IMR-90 (cell line): ENCODE measurements at regions of chr3 and their contacts with region 1.

Region 1: DNA sequence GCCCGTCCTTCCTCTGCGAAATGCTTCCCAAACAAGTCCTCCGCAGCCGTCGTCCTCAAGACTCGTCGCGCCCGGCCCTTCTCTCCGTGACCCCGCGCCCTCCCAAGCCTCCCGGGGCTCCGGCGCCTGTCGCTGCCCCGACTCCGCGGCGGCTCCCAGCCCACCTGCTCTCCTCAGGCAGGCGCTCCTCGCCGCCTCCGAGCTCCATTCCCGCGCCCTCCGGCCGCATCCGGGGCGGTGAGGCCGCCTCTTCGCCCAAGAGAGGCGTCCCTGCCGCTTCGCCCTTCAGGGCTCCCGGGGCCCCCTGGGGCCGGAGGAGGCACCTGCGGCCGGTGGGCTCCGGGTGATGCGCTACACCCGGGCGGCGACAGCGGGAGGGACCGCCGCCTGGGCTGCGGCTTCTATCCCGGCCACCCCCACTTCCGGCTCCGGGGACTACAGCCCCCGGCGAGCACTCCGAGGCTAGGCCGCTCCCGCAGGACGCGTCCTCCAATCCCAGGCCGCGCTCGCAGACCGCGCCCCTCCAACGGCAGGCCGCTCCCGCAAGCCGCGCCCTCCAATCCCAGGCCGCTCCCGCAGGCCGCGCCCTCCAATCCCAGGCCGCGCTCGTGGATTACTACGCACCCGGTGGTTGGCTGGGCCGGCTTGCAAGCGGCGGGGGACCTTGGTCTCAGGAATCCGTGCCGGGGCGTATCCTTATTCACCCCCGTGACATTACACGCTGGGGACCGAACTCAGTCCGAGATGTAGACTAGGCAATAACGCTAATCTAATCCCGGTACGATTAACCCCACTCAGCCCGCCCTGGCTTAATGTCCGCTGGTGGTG is at the start of gene RUBCN:
- DNase-seq: peak; percentile 92
- ATAC-seq: peak; percentile 99
- H3K4me3 ChIP-seq: peak within 1 kb of the TSS; percentile 75
- H3K27ac ChIP-seq: peak within 1 kb of the TSS; percentile 20
- H3K4me1 ChIP-seq: peaks cover 1% of the 10 kb centered on the region; the same call in 1 of the 2 replicates
- H3K27me3 ChIP-seq: no peaks in the 10 kb centered on the region
- CTCF ChIP-seq: no peak
- POLR2A ChIP-seq: peak; percentile 60
- RAD21 ChIP-seq: no peak; the same call in 1 of the 2 replicates
- total RNA-seq, gene RUBCN: 8.3 and 10.8 TPM in 2 replicates

Region 2: DNA sequence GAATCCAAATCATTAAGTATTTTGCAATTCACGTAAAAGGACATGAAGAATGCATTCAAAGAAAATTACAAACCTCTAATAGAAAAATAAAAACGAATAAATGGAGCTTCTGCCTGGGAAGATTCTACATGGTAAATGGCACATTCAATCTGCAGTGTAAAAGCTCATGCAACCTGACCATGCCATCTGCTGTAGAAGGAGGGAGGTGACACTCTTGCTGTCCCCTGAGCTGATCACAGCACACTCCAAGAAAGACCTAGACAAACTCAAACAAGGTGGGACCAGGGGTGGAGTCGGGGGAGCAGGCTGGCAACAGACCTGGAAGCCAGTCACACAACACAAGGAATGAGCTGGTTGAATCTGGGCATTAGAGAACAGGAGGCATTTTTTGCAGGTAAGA is 282.7 kb before region 1 on chr3:
- CTCF ChIA-PET with region 1: no interaction called
- POLR2A ChIA-PET with region 1: no interaction called
- dilution Hi-C with region 1: no loop called
- in situ Hi-C with region 1: no loop called
- intact Hi-C with region 1: no loop called
- DNase-seq: no peak
- ATAC-seq: no peak
- H3K4me3 ChIP-seq: no peak overlapping the region
- H3K27ac ChIP-seq: no peak overlapping the region
- H3K4me1 ChIP-seq: peaks cover 7% of the 10 kb centered on the region
- H3K27me3 ChIP-seq: peaks cover 7% of the 10 kb centered on the region
- CTCF ChIP-seq: no peak
- POLR2A ChIP-seq: no peak
- RAD21 ChIP-seq: peak; percentile 34; the same call in 1 of the 2 replicates

Region 3: GRCh38 chr3:197711973-197712707 is 24.6 kb before region 1 on chr3:
- CTCF ChIA-PET with region 1: no interaction called
- POLR2A ChIA-PET with region 1: no interaction called
- dilution Hi-C with region 1: no loop called
- in situ Hi-C with region 1: no loop called
- intact Hi-C with region 1: loop called (anchors 2 kb)
- DNase-seq: peak; percentile 98
- ATAC-seq: peak; percentile 99
- H3K4me3 ChIP-seq: peak overlapping the region; percentile 64
- H3K27ac ChIP-seq: peak overlapping the region; percentile 69
- H3K4me1 ChIP-seq: peaks cover 7% of the 10 kb centered on the region
- H3K27me3 ChIP-seq: no peaks in the 10 kb centered on the region
- CTCF ChIP-seq: no peak
- POLR2A ChIP-seq: peak; percentile 75
- RAD21 ChIP-seq: peak; percentile 16; the same call in 1 of the 2 replicates

Region 4: GRCh38 chr3:197749601-197750395 is 13.1 kb after region 1 on chr3 and contains the start of gene FYTTD1:
- CTCF ChIA-PET with region 1: no interaction called
- POLR2A ChIA-PET with region 1: no interaction called
- dilution Hi-C with region 1: no loop called
- in situ Hi-C with region 1: no loop called
- intact Hi-C with region 1: loop called (anchors 1 kb)
- DNase-seq: peak; percentile 84
- ATAC-seq: peak; percentile 93
- H3K4me3 ChIP-seq: peak within 1 kb of the TSS; percentile 89
- H3K27ac ChIP-seq: peak within 1 kb of the TSS; percentile 94
- H3K4me1 ChIP-seq: peaks cover 2% of the 10 kb centered on the region
- H3K27me3 ChIP-seq: no peaks in the 10 kb centered on the region
- CTCF ChIP-seq: peak; percentile 46
- POLR2A ChIP-seq: no peak; the same call in none of the 2 replicates
- RAD21 ChIP-seq: peak; percentile 33; the same call in 1 of the 2 replicates
- total RNA-seq, gene FYTTD1: 50.2 and 67.2 TPM in 2 replicates